ENCODE measurements at regions of chr6 and their contacts with region 1.

Region 1: DNA sequence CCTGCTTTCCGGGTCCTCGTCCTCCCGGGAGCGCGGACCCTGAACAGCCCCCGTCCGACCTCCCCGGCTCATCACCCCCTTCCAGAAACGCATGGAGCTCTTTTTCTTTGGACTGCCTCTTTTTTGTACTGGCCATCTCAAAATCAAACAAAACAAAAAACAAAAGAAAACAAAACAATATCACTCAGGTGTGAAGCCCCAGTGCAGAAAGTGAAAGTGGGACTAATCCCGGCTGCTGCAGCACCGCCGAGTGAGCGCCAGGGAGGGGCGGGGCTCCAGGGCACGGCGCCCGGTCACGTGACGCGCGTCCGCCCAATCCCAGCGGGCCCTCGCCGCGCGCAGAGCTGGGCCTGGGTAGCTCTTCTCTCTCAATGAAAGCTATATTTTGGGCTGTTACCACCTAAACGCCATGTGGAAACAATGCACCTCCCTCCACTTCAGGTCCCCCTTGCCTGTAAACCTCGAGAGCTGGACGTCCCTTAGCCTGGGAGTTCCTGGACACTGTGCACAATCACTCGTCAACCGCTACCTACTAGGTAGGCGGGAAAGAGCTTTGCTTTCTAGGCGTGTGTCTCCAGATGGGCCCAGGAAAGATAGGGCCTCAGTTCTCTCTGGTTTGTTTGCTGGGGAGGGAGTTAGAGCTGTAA is 93.7 kb upstream of the PRDM1 start:
- DNase-seq: peak; percentile 73 to 95 (median 86)
- ATAC-seq: peak; percentile 88
- H3K4me3 ChIP-seq: peak overlapping the region; percentile 70 to 90
- H3K4me3 Mint-ChIP-seq: peak overlapping the region; percentile 94
- H3K27ac ChIP-seq: peak overlapping the region; percentile 42 to 80
- H3K27ac Mint-ChIP-seq: peak overlapping the region; percentile 94
- H3K4me1 ChIP-seq: peaks cover 32% of the 10 kb centered on the region
- H3K4me1 Mint-ChIP-seq: peaks cover 27% of the 10 kb centered on the region
- H3K27me3 ChIP-seq: peaks cover 5 to 33% of the 10 kb centered on the region in 2 experiments
- H3K27me3 Mint-ChIP-seq: peaks cover 63% of the 10 kb centered on the region
- CTCF ChIP-seq: no peak

Region 2: GRCh38 chr6:105402939-105403935 is 589.2 kb before region 1 on chr6 and contains the start of gene PREP:
- CTCF ChIA-PET with region 1: no interaction called
- POLR2A ChIA-PET with region 1: no interaction called
- intact Hi-C with region 1: loop called in 1 of 2 experiments (anchors 10 kb)
- DNase-seq: peak; percentile 62 to 90 (median 80)
- ATAC-seq: peak; percentile 94
- H3K4me3 ChIP-seq: peak within 1 kb of the TSS; percentile 90 to 95
- H3K4me3 Mint-ChIP-seq: peak within 1 kb of the TSS; percentile 90
- H3K27ac ChIP-seq: peak within 1 kb of the TSS; percentile 58 to 61
- H3K27ac Mint-ChIP-seq: peak within 1 kb of the TSS; percentile 73
- H3K4me1 ChIP-seq: peaks cover 46% of the 10 kb centered on the region
- H3K4me1 Mint-ChIP-seq: peaks cover 50% of the 10 kb centered on the region
- H3K27me3 ChIP-seq: no peaks in the 10 kb centered on the region
- H3K27me3 Mint-ChIP-seq: peaks cover 12% of the 10 kb centered on the region
- CTCF ChIP-seq: peak; percentile 83
- total RNA-seq, gene PREP: 15.7 to 17.6 TPM

Region 3: DNA sequence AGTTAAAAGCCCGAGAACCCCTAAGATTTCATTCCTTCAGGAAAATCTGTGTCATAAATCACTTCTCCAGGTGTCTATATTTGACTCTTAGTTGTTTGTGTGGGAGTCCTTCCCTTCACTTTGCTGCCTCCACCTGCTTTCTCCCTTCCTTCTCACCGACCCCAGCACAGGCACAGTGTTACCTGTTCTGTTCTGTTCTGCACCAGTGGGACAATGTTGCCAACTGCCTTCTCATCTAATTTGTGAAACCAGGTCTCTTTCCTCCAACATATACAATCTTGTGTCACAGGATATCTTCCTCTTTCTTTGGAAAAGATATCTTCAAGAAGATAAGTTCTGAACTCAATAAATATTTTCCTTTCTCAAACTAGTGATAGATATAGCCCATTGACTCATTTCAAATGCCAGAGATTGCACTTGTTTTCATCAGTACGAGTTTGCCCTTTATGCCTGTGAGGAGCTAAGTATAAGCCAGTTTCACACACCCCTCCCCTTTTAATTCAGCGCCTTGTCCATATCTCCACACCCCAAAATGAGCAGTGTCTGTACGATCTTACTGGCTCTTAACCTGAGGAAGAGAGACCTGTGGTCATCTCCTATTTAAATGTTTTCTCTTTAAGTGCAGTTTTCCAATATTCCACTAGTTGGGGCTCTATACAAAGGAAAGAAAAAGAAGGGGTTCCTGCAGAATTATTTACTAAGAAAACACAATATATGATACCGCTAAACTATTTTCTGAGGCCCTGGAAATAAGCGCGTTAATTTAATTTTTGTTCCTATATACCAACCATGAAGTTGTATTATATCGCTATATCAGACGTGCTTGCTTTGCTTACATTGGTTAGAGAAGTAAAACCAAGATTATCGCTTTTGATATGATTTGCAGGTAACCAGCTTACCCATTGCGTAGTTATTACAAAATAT is 507.9 kb before region 1 on chr6:
- CTCF ChIA-PET with region 1: interaction called, 3 read pairs
- POLR2A ChIA-PET with region 1: interaction called, 6 read pairs
- intact Hi-C with region 1: loop called in 1 of 2 experiments (anchors 10 kb)
- DNase-seq: peak in 2 of 9 experiments; percentile 56 to 64
- ATAC-seq: peak; percentile 50
- H3K4me3 ChIP-seq: no peak overlapping the region
- H3K4me3 Mint-ChIP-seq: peak overlapping the region; percentile 60
- H3K27ac ChIP-seq: peak overlapping the region in 1 of 2 experiments; percentile 18
- H3K27ac Mint-ChIP-seq: peak overlapping the region; percentile 86
- H3K4me1 ChIP-seq: no peaks in the 10 kb centered on the region
- H3K4me1 Mint-ChIP-seq: peaks cover 24% of the 10 kb centered on the region
- H3K27me3 ChIP-seq: no peaks in the 10 kb centered on the region
- H3K27me3 Mint-ChIP-seq: peaks cover 2% of the 10 kb centered on the region
- CTCF ChIP-seq: peak; percentile 85

Region 4: DNA sequence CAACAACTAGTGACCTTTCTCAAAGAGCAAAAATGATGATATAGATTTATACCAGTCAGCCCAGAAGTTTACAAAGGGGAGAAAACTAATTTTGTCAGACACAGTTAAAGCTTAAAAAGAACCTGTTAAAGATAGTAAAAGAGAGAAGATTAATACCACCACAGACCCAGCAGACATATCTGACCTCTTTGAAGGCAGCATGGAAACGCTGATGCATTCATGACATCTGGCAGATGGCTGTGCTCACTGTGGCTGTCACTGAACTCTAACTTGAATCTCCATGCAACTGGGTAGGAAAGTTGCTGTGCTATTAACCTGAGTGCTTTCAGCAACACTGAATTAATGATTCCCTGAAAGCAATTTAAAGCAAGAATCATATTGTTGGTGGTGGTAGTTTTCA is 66.1 kb before region 1 on chr6:
- CTCF ChIA-PET with region 1: no interaction called
- POLR2A ChIA-PET with region 1: no interaction called
- intact Hi-C with region 1: no loop called
- DNase-seq: no peak
- ATAC-seq: no peak
- H3K4me3 ChIP-seq: no peak overlapping the region
- H3K4me3 Mint-ChIP-seq: no peak overlapping the region
- H3K27ac ChIP-seq: no peak overlapping the region
- H3K27ac Mint-ChIP-seq: no peak overlapping the region
- H3K4me1 ChIP-seq: no peaks in the 10 kb centered on the region
- H3K4me1 Mint-ChIP-seq: no peaks in the 10 kb centered on the region
- H3K27me3 ChIP-seq: no peaks in the 10 kb centered on the region
- H3K27me3 Mint-ChIP-seq: peaks cover 7% of the 10 kb centered on the region
- CTCF ChIP-seq: no peak

Region 5: DNA sequence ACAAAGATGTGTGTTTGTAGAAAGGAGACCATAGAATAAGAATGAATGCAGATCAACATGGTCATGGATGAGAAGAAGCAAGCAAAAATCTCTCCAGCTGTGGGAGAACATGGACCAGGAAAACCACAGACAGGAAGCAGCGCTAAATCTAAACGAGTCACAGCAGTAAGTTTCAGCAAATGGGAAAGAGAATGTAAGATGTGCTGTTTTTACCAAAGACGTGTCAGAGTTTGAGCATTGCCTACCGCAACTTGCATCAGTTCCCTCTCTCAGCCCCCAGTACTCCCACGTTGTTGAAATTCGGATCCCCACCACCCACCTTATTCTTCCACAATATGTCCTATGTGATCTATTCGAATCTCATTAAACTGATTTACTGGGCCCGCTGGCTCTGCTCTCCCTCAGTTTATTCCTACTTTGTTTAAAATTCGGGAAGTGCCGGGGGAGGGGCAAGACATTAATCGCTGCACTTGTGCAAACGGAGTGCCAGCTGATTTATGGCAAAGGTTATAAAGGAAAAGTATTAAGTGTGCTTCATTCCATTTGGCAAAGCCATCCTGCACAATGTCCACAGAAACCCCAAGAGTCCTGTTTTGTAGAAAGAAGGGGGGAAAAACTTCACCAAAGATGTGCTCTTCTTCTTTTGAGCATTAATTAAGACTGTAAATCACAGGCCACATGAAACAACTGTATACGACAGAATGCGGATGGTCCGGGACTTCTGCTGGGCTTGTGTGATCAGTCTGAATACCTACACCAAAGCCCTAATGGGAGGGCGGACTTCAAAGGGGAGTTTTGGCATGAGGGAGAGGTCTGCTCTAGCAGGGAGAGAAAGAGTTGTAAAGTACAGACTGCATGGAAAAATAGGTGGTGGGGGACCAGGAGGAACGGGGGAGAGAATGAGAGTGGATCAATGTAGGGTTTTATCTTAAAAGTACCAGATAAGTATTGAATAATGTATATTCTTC is 34.6 kb after region 1 on chr6:
- CTCF ChIA-PET with region 1: no interaction called
- POLR2A ChIA-PET with region 1: no interaction called
- intact Hi-C with region 1: no loop called
- DNase-seq: no peak
- ATAC-seq: no peak
- H3K4me3 ChIP-seq: no peak overlapping the region
- H3K4me3 Mint-ChIP-seq: no peak overlapping the region
- H3K27ac ChIP-seq: no peak overlapping the region
- H3K27ac Mint-ChIP-seq: no peak overlapping the region
- H3K4me1 ChIP-seq: no peaks in the 10 kb centered on the region
- H3K4me1 Mint-ChIP-seq: peaks cover 14% of the 10 kb centered on the region
- H3K27me3 ChIP-seq: no peaks in the 10 kb centered on the region
- H3K27me3 Mint-ChIP-seq: peaks cover 29% of the 10 kb centered on the region
- CTCF ChIP-seq: no peak

Region 6: DNA sequence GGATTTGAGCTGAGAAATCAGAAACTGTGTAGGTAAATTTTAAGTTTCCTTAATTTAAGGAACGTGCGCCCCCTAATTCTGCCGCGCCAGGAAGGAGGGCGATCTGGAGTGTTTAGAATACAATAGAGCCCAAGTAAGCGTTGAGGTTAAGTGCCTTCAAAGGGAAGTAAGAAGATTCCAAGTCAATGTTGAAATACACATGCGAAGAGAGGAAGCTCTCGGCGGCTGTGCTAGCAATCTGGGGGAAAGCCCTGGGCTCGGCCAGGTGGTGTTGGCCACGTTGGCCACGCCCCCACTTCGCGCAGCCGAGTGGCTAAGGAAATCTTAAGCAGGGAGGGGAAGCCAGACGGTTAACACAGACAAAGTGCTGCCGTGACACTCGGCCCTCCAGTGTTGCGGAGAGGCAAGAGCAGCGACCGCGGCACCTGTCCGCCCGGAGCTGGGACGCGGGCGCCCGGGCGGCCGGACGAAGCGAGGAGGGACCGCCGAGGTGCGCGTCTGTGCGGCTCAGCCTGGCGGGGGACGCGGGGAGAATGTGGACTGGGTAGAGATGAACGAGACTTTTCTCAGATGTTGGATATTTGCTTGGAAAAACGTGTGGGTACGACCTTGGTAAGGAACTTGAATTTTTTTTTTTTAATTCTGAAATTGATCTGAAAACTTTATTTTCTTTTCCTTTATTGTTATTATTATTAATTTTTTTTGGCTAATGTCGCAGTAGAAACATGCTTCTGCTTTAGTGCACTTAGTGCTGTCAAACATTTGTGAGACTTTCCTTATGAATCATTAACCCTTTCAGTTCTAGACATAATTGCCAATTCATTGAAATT is 93.8 kb after region 1 on chr6 and contains the start of gene PRDM1:
- CTCF ChIA-PET with region 1: interaction called, 3 read pairs
- POLR2A ChIA-PET with region 1: interaction called, 4 read pairs
- intact Hi-C with region 1: loop called in 1 of 2 experiments (anchors 5 kb)
- DNase-seq: peak; percentile 53 to 94 (median 76)
- ATAC-seq: peak; percentile 85
- H3K4me3 ChIP-seq: peak within 1 kb of the TSS; percentile 44 to 45
- H3K4me3 Mint-ChIP-seq: peak within 1 kb of the TSS; percentile 84
- H3K27ac ChIP-seq: no peak within 1 kb of the TSS
- H3K27ac Mint-ChIP-seq: peak within 1 kb of the TSS; percentile 38
- H3K4me1 ChIP-seq: peaks cover 27% of the 10 kb centered on the region
- H3K4me1 Mint-ChIP-seq: peaks cover 70% of the 10 kb centered on the region
- H3K27me3 ChIP-seq: peaks cover 0 to 24% of the 10 kb centered on the region in 2 experiments
- H3K27me3 Mint-ChIP-seq: peaks cover 42% of the 10 kb centered on the region
- CTCF ChIP-seq: no peak
- total RNA-seq, gene PRDM1: 35.5 to 38.4 TPM

Region 7: GRCh38 chr6:106114492-106115265 is 122.2 kb after region 1 on chr6:
- CTCF ChIA-PET with region 1: no interaction called
- POLR2A ChIA-PET with region 1: interaction called, 3 read pairs
- intact Hi-C with region 1: loop called in 1 of 2 experiments (anchors 5 kb)
- DNase-seq: peak in 3 of 9 experiments; percentile 37 to 66 (median 60)
- ATAC-seq: peak; percentile 15
- H3K4me3 ChIP-seq: peak overlapping the region in 1 of 2 experiments; percentile 7
- H3K4me3 Mint-ChIP-seq: peak overlapping the region; percentile 55
- H3K27ac ChIP-seq: peak overlapping the region in 1 of 2 experiments; percentile 61
- H3K27ac Mint-ChIP-seq: peak overlapping the region; percentile 58
- H3K4me1 ChIP-seq: peaks cover 55% of the 10 kb centered on the region
- H3K4me1 Mint-ChIP-seq: peaks cover 57% of the 10 kb centered on the region
- H3K27me3 ChIP-seq: no peaks in the 10 kb centered on the region
- H3K27me3 Mint-ChIP-seq: peaks cover 21% of the 10 kb centered on the region
- CTCF ChIP-seq: no peak

Region 8: DNA sequence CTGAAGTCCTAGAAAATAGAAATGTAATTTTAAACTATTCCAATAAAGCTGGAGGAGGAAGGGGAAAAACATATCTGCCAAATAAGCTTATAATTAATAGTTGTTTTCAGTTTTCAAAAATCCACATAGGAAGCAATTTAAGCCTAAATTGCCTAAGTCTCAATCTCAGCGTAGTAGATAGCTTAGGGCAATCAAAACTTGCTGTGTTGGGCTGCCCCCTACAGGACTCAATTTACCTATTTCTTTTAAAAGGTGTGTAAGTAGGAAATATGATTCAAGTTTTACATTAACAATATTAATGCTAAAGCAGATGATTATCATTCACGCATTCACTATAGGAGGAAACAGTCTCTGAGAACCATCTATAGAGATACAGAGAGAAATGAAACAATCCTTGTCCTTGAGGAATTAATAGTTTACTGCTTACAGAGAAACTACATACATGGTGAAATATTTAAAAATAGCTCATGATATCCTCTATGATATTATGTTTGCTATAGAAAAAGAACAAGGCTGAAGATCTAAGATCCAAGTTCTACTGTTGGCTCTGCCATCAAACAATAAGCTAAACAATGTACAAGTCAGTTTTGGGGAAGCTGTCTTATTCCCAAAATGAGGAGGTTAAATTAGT is 231.0 kb after region 1 on chr6:
- CTCF ChIA-PET with region 1: interaction called, 16 read pairs
- POLR2A ChIA-PET with region 1: interaction called, 4 read pairs
- intact Hi-C with region 1: loop called in 1 of 2 experiments (anchors 5 kb)
- DNase-seq: peak; percentile 39 to 85 (median 74)
- ATAC-seq: peak; percentile 84
- H3K4me3 ChIP-seq: no peak overlapping the region
- H3K4me3 Mint-ChIP-seq: no peak overlapping the region
- H3K27ac ChIP-seq: no peak overlapping the region
- H3K27ac Mint-ChIP-seq: no peak overlapping the region
- H3K4me1 ChIP-seq: no peaks in the 10 kb centered on the region
- H3K4me1 Mint-ChIP-seq: peaks cover 6% of the 10 kb centered on the region
- H3K27me3 ChIP-seq: no peaks in the 10 kb centered on the region
- H3K27me3 Mint-ChIP-seq: no peaks in the 10 kb centered on the region
- CTCF ChIP-seq: peak; percentile 84

Region 9: GRCh38 chr6:106519460-106520394 is 527.3 kb after region 1 on chr6:
- CTCF ChIA-PET with region 1: no interaction called
- POLR2A ChIA-PET with region 1: no interaction called
- intact Hi-C with region 1: loop called (anchors 5 to 10 kb)
- DNase-seq: peak; percentile 41 to 93 (median 77)
- ATAC-seq: peak; percentile 50
- H3K4me3 ChIP-seq: peak overlapping the region; percentile 48 to 51
- H3K4me3 Mint-ChIP-seq: peak overlapping the region; percentile 91
- H3K27ac ChIP-seq: peak overlapping the region; percentile 79 to 82
- H3K27ac Mint-ChIP-seq: peak overlapping the region; percentile 96
- H3K4me1 ChIP-seq: peaks cover 48% of the 10 kb centered on the region
- H3K4me1 Mint-ChIP-seq: peaks cover 76% of the 10 kb centered on the region
- H3K27me3 ChIP-seq: no peaks in the 10 kb centered on the region
- H3K27me3 Mint-ChIP-seq: no peaks in the 10 kb centered on the region
- CTCF ChIP-seq: no peak